PC-3 (cell line): ENCODE measurements at regions of chr11 and their contacts with region 1.

Region 1: DNA sequence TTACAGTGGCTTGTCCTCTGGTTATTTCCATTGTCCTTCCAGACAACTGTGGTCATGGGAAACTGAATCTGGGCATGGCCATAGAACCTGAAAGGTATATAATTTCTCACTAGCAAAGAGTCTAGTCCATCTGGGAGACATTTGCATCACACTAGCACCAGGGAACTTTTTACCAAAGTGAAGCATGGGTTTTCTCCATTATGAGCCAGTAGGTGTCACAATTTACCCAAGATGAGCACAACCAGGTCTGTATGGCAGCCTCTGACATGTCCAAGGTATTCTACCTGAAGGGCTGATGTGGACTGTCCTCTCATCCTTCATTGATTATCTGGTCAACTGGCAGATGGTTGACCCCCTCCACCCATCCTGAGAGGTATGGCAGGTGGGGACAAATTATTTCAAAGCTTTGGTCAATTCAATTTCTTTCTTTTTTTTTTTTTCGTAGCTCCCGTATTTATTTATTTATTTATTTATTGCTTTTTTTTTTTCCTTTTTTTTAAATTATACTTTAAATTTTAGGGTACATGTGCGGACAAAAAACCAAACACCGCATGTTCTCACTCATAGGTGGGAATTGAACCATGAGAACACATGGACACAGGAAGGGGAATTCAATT is 425.9 kb downstream of the TMEM135 start:
- DNase-seq: peak; percentile 84
- ATAC-seq: peak; percentile 93
- H3K4me3 ChIP-seq: no peak overlapping the region
- H3K27ac ChIP-seq: no peak overlapping the region
- H3K4me1 ChIP-seq: no peaks in the 10 kb centered on the region
- H3K27me3 ChIP-seq: no peaks in the 10 kb centered on the region
- CTCF ChIP-seq: peak; percentile 86

Region 2: DNA sequence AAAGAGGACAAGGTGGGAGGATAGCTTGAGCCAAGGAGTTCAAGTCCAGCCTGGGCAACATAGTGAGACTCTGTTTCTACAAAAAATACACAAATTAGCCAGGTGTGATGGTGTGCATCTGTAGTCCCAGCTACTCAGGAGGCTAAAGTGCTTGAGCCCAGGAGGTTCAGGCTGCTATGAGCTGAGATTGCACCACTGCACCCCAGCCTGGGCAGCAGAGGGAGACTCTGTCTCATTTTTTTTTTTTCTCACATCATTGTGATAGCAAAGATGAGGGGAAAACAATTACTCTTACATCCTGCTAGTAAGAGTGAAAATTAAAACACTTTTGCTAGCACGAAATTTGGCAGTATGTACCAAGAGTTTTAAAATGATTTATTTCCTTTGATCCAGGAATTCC is 37.8 kb after region 1 on chr11:
- CTCF ChIA-PET with region 1: no interaction called
- POLR2A ChIA-PET with region 1: interaction called, 11 read pairs
- intact Hi-C with region 1: no loop called
- DNase-seq: no peak
- ATAC-seq: no peak
- H3K4me3 ChIP-seq: no peak overlapping the region
- H3K27ac ChIP-seq: no peak overlapping the region
- H3K4me1 ChIP-seq: no peaks in the 10 kb centered on the region
- H3K27me3 ChIP-seq: no peaks in the 10 kb centered on the region
- CTCF ChIP-seq: no peak; the same call in 1 of the 2 replicates

Region 3: GRCh38 chr11:87722756-87723565 is 259.4 kb after region 1 on chr11:
- CTCF ChIA-PET with region 1: no interaction called
- POLR2A ChIA-PET with region 1: no interaction called
- intact Hi-C with region 1: loop called (anchors 1 kb)
- DNase-seq: peak; percentile 64
- ATAC-seq: peak; percentile 72
- H3K4me3 ChIP-seq: 0 out of 2 replicates have a peak overlapping the region, but pooled peaks have one; percentile 8
- H3K27ac ChIP-seq: no peak overlapping the region
- H3K4me1 ChIP-seq: peaks cover 11% of the 10 kb centered on the region
- H3K27me3 ChIP-seq: no peaks in the 10 kb centered on the region
- CTCF ChIP-seq: peak; percentile 94

Region 4: GRCh38 chr11:87870086-87870485 is 406.5 kb after region 1 on chr11:
- CTCF ChIA-PET with region 1: no interaction called
- POLR2A ChIA-PET with region 1: no interaction called
- intact Hi-C with region 1: loop called (anchors 1 kb)
- DNase-seq: peak; percentile 32
- ATAC-seq: peak; percentile 95
- H3K4me3 ChIP-seq: no peak overlapping the region
- H3K27ac ChIP-seq: no peak overlapping the region
- H3K4me1 ChIP-seq: no peaks in the 10 kb centered on the region
- H3K27me3 ChIP-seq: no peaks in the 10 kb centered on the region
- CTCF ChIP-seq: no peak

Region 5: GRCh38 chr11:88016392-88017170 is 553.0 kb after region 1 on chr11:
- CTCF ChIA-PET with region 1: interaction called, 8 read pairs
- POLR2A ChIA-PET with region 1: no interaction called
- intact Hi-C with region 1: loop called (anchors 1 kb)
- DNase-seq: peak; percentile 96
- ATAC-seq: peak; percentile 84
- H3K4me3 ChIP-seq: no peak overlapping the region
- H3K27ac ChIP-seq: no peak overlapping the region
- H3K4me1 ChIP-seq: peaks cover 21% of the 10 kb centered on the region
- H3K27me3 ChIP-seq: no peaks in the 10 kb centered on the region
- CTCF ChIP-seq: peak; percentile 97